ENCODE measurements at regions of chr3 and their contacts with region 1.

Region 1: GRCh38 chr3:62374341-62375218 is 1.2 kb upstream of the FEZF2 start:
- DNase-seq: no peak
- ATAC-seq: no peak
- H3K4me3 ChIP-seq: no peak overlapping the region
- H3K4me3 Mint-ChIP-seq: peak overlapping the region in 7 of 10 donors; percentile 9 to 49 (median 32)
- H3K27ac ChIP-seq: no peak overlapping the region
- H3K27ac Mint-ChIP-seq: peak overlapping the region in 1 of 9 donors; percentile 52
- H3K4me1 ChIP-seq: no peaks in the 10 kb centered on the region
- H3K4me1 Mint-ChIP-seq: peaks cover 0 to 19% (median 8%) of the 10 kb centered on the region in 7 donors
- H3K27me3 ChIP-seq: peaks cover 0 to 9% of the 10 kb centered on the region in 2 donors
- H3K27me3 Mint-ChIP-seq: peaks cover 61 to 93% (median 75%) of the 10 kb centered on the region in 5 donors

Region 2: GRCh38 chr3:62343755-62344154 is 30.8 kb before region 1 on chr3:
- CTCF ChIA-PET with region 1: no interaction called
- POLR2A ChIA-PET with region 1: no interaction called
- intact Hi-C with region 1: no loop called
- DNase-seq: no peak
- ATAC-seq: no peak
- H3K4me3 ChIP-seq: no peak overlapping the region
- H3K4me3 Mint-ChIP-seq: no peak overlapping the region
- H3K27ac ChIP-seq: no peak overlapping the region
- H3K27ac Mint-ChIP-seq: no peak overlapping the region
- H3K4me1 ChIP-seq: no peaks in the 10 kb centered on the region
- H3K4me1 Mint-ChIP-seq: no peaks in the 10 kb centered on the region
- H3K27me3 ChIP-seq: no peaks in the 10 kb centered on the region
- H3K27me3 Mint-ChIP-seq: peaks cover 0 to 25% (median 5%) of the 10 kb centered on the region in 5 donors

Region 3: GRCh38 chr3:62587203-62588117 is 212.9 kb after region 1 on chr3:
- CTCF ChIA-PET with region 1: no interaction called
- POLR2A ChIA-PET with region 1: no interaction called
- intact Hi-C with region 1: no loop called
- DNase-seq: no peak
- ATAC-seq: no peak
- H3K4me3 ChIP-seq: no peak overlapping the region
- H3K4me3 Mint-ChIP-seq: no peak overlapping the region
- H3K27ac ChIP-seq: no peak overlapping the region
- H3K27ac Mint-ChIP-seq: no peak overlapping the region
- H3K4me1 ChIP-seq: no peaks in the 10 kb centered on the region
- H3K4me1 Mint-ChIP-seq: no peaks in the 10 kb centered on the region
- H3K27me3 ChIP-seq: no peaks in the 10 kb centered on the region
- H3K27me3 Mint-ChIP-seq: peaks cover 0 to 8% (median 7%) of the 10 kb centered on the region in 5 donors

Region 4: GRCh38 chr3:62876064-62876463 is 501.5 kb after region 1 on chr3:
- CTCF ChIA-PET with region 1: no interaction called
- POLR2A ChIA-PET with region 1: no interaction called
- intact Hi-C with region 1: loop called in 1 of 2 experiments (anchors 5 kb)
- DNase-seq: no peak
- ATAC-seq: no peak
- H3K4me3 ChIP-seq: no peak overlapping the region
- H3K4me3 Mint-ChIP-seq: peak overlapping the region in 1 of 10 donors; percentile 30
- H3K27ac ChIP-seq: no peak overlapping the region
- H3K27ac Mint-ChIP-seq: no peak overlapping the region
- H3K4me1 ChIP-seq: no peaks in the 10 kb centered on the region
- H3K4me1 Mint-ChIP-seq: peaks cover 0 to 3% (median 0%) of the 10 kb centered on the region in 7 donors
- H3K27me3 ChIP-seq: peaks cover 0 to 6% of the 10 kb centered on the region in 2 donors
- H3K27me3 Mint-ChIP-seq: peaks cover 48 to 62% (median 54%) of the 10 kb centered on the region in 5 donors